ENCODE measurements at regions of chr2 and their contacts with region 1.

Region 1: DNA sequence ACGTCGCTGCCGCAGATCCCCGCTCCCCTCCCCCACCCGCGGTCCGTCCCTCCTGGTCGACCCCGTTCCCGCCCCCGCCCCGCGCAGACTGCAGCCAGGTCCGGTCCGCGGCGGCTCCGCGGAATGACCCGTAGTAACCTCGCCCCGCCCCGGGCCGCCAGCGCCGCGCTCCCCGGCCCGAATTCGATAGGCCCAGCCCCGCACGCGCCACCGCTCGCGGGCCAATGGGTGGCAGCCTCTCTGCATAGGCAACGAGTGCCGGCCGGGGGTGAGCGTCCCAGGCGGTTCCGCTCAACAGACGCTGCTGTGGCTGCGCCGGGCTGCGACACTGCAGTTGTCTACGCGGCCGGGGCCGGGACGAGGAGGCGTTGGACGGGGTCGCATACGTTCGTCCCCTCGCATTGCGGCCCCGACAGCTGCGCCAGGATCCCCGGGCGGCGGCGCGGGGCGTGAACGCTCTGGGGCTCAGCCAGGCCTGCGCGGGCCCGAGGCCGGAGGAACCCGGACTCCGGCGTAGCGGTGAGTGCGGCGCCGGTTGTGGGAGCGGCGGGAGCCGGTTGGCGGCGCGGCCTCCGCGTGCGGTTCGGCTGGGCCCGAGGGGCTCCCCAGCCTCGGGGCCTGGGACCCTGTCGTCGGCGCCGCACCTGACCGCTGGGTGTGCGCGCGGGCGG is at the start of gene ACSL3:
- DNase-seq: peak; percentile 93
- H3K4me3 Mint-ChIP-seq: peak within 1 kb of the TSS; percentile 76
- H3K27ac Mint-ChIP-seq: peak within 1 kb of the TSS; percentile 86
- H3K4me1 Mint-ChIP-seq: peaks cover 9% of the 10 kb centered on the region
- H3K27me3 Mint-ChIP-seq: peaks cover 11% of the 10 kb centered on the region
- total RNA-seq, gene ACSL3: 72.5 and 74.0 TPM in 2 replicates

Region 2: DNA sequence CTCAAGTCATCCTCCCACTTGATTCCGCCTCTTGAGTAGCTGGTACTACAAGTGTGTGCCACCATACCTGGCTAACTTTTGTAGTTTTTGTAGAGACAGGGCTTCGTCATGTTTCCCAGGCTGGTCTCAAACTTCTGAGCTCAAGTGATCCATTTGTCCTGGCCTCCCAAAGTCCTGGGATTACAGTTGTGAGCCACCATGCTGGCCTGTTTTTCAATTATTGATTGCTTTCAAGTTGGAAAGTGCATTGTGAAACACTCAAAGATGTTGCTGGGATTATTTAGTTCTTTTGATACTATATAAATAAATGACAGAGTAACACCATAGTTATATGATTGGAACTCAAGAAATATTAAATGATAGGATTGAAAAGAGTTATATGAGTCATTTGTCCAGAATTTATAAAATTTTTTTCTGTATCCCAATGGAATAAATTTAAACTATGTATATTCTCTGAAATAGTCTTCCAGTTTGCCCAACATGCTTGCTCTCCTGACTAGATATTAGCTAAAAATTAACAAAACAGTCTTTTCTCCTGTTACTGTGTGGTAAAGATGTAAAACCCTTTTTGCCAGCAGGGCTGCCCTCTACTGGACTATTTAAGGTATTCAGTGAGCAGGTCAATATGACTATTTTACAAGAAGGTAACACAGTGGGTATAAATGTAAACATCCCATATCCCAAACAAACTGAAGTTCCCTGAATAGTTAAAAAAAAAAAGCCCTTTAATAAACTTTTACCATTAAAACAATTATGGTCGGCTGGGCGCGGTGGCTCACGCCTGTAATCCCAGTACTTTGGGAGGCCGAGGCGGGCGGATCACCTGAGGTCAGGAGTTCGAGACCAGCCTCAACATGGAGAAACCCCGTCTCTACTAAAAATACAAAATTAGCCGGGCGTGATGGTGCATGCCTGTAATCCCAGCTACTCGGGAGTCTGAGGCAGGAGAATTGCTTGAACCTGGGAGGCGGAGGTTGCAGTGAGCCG is 42.7 kb after region 1 on chr2:
- intact Hi-C with region 1: loop called (anchors 5 kb)
- DNase-seq: no peak
- H3K4me3 Mint-ChIP-seq: no peak overlapping the region
- H3K27ac Mint-ChIP-seq: no peak overlapping the region
- H3K4me1 Mint-ChIP-seq: peaks cover 26% of the 10 kb centered on the region
- H3K27me3 Mint-ChIP-seq: no peaks in the 10 kb centered on the region